Heart left ventricle (tissue), 16 donors: ENCODE measurements at regions of chr15 and their contacts with region 1.

Region 1: DNA sequence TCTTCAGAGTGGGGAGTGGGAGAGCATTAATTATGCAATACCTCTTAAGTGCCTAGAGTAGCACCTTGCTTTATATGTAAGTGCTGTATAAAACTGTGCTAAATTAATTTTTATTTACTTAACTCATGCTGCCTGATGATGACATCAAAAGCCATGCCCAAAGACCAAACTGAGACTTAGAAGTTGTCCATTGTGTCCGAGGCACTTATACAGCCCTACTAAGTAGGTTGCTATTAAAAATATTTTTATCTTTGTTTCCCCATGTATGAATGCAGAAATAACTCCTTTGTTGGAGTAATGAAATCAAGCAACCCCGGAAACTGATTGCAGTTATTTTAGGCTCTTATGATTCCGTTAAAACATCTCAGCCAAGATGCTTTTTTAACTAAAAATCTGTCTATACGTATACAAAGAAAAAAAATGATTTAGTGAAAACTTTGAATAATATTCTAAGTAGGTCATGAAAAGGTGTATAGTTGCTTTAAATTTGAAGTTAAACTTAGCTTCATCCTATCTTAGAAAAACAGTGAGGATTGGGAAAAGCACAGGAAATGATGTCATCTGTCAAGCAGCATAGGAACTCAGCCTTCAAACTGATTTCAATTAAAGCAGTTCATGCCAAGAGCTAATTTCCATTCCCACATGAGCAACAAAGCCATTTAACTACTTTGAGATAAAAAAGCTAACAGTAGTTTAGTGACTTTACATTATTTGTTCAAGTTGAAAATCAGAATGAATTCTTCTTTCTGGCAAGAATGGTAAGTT is 43.0 kb downstream of the FBN1 start:
- DNase-seq: no peak
- ATAC-seq: peak in 3 of 4 donors; percentile 28 to 86 (median 83)
- H3K4me3 ChIP-seq: peak overlapping the region in 8 of 12 donors; percentile 4 to 40 (median 26)
- H3K27ac ChIP-seq: peak overlapping the region in 11 of 12 donors; percentile 44 to 81 (median 71)
- H3K4me1 ChIP-seq: peaks cover 0 to 42% (median 20%) of the 10 kb centered on the region in 12 donors
- H3K27me3 ChIP-seq: no peaks in the 10 kb centered on the region
- CTCF ChIP-seq: no peak
- POLR2A ChIP-seq: no peak

Region 2: DNA sequence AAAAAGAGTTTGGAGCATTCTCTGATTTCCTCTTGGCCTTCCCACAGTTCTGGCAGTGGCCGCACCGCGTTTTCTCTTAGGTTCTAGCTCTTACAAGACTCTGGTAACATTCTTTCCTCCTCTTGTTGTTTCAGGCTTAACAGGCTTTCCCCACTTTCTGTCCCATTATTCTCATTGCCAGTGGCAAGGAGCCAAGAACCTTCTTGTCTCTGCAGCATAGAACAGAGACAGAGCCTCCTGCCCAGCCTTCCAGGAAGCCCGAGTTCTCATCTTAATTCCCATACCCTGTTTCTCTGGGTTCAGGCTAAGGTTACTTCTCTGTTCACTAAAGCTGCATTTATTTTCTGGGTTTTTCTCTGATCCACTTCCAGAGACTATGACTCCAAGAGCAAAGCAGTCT is 210.2 kb before region 1 on chr15:
- intact Hi-C with region 1: no loop called
- DNase-seq: peak in 4 of 5 donors; percentile 38 to 63 (median 52)
- ATAC-seq: peak; percentile 39 to 62 (median 50)
- H3K4me3 ChIP-seq: no peak overlapping the region
- H3K27ac ChIP-seq: peak overlapping the region; percentile 7 to 63 (median 50)
- H3K4me1 ChIP-seq: peaks cover 0 to 68% (median 10%) of the 10 kb centered on the region in 12 donors
- H3K27me3 ChIP-seq: no peaks in the 10 kb centered on the region
- CTCF ChIP-seq: no peak
- POLR2A ChIP-seq: no peak

Region 3: GRCh38 chr15:48433226-48433886 is 169.2 kb before region 1 on chr15:
- intact Hi-C with region 1: no loop called
- DNase-seq: no peak
- ATAC-seq: no peak
- H3K4me3 ChIP-seq: no peak overlapping the region
- H3K27ac ChIP-seq: no peak overlapping the region
- H3K4me1 ChIP-seq: peaks cover 0 to 5% (median 0%) of the 10 kb centered on the region in 12 donors
- H3K27me3 ChIP-seq: no peaks in the 10 kb centered on the region
- CTCF ChIP-seq: no peak
- POLR2A ChIP-seq: no peak

Region 4: DNA sequence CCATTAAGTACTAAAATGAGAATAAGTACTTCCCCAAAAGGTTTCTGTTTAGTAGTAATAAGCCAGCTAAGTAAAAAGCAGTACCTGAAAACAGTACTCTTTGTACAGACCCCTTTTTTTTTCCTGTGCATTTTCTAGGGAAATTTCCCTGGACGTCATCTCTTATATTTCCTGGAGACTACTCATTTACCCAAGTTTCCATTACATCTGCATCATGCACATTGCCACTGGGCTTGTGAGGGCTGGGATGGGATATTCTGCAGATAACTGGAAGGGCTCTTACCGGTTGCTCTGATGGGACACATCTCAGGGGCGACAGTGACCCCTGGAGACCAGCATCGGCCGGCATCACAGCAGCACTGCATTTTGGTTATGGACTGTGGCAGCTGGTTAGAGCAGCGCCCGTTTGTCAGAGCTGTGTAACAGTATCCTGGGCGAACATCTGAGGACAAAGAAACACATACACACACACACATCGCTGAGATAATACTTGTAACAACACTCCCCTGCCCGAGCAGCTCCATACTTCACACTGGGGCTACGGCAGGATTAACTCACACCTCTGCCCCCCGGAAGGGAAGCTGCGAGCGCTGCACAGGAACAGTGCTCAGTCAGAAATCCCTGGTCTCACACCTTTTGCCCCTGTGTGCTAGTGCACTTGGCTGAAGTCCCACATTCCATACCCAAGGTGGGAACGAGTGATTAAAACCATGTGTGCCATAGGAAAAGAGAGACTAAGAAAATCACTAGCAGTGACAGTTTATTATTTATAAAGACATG is 82.0 kb before region 1 on chr15:
- intact Hi-C with region 1: loop called in 1 of 10 experiments (anchors 10 kb)
- DNase-seq: no peak
- ATAC-seq: peak in 1 of 4 donors; percentile 39
- H3K4me3 ChIP-seq: no peak overlapping the region
- H3K27ac ChIP-seq: no peak overlapping the region
- H3K4me1 ChIP-seq: peaks cover 0 to 16% (median 0%) of the 10 kb centered on the region in 12 donors
- H3K27me3 ChIP-seq: no peaks in the 10 kb centered on the region
- CTCF ChIP-seq: no peak
- POLR2A ChIP-seq: no peak

Region 5: GRCh38 chr15:48671103-48672022 is 68.8 kb after region 1 on chr15:
- intact Hi-C with region 1: no loop called
- DNase-seq: peak in 4 of 5 donors; percentile 45 to 77 (median 61)
- ATAC-seq: peak; percentile 67 to 92 (median 91)
- H3K4me3 ChIP-seq: no peak overlapping the region
- H3K27ac ChIP-seq: peak overlapping the region; percentile 22 to 79 (median 52)
- H3K4me1 ChIP-seq: peaks cover 0 to 9% (median 0%) of the 10 kb centered on the region in 12 donors
- H3K27me3 ChIP-seq: no peaks in the 10 kb centered on the region
- CTCF ChIP-seq: no peak
- POLR2A ChIP-seq: no peak